HepG2 (cell line): ENCODE measurements at regions of chr4 and their contacts with region 1.

Region 1: DNA sequence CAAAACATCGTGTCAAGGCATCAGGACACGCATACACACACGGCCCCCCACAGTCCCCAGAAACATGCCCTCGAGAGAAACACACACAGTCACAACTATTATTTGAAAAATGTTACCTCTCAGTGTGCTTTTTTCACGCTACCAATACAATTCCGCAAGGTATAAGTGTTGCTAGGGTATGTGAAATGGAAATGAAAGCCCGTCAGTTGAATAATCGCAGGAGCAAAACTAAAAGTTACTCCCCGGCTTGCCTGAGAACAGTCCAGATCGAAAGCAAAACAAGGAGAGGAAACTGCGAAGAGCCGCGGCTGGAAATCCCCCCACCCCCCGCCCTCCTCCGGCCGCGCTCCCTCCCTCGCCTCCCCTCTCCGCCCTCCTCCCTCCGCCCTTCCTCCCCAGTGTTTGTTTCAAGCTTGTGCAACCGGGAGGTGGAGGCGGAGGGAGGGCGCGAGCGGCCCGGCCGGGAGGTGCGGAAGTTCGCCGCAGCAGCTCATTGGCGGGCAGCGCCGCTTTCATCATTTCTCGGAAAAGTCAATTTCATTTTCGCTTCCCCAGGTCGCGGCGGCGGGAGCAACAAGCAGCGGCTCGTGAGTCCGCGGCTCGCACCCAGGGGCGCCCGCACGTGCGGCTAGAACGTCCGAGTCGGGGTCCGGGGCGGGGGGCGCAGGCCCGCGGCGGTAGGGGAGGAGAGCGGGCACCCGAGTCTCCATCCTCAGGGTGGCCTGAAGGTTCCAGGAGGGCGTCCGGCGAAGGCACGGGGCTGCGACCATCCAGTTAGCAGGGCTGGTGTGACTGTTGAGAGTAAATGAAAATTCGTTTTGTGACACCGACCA is at the start of gene IRF2:
- DNase-seq: peak; percentile 93
- ATAC-seq: peak; percentile 60
- H3K4me3 ChIP-seq: peak within 1 kb of the TSS; percentile 94 to 99 (median 98)
- H3K27ac ChIP-seq: peak within 1 kb of the TSS; percentile 92
- H3K4me1 ChIP-seq: peaks cover 63% of the 10 kb centered on the region
- H3K27me3 ChIP-seq: no peaks in the 10 kb centered on the region; a peak in 1 of 5 replicates
- CTCF ChIP-seq: peak; percentile 27; the same call in 1 of the 2 replicates
- EP300 ChIP-seq: peak in 1 of 2 experiments; percentile 79; a peak in 2 of 4 replicates
- POLR2A ChIP-seq: peak in 1 of 2 experiments; percentile 66; a peak in 1 of 4 replicates
- RAD21 ChIP-seq: no peak
- total RNA-seq, gene IRF2: 15.5 and 24.8 TPM in 2 replicates

Region 2: DNA sequence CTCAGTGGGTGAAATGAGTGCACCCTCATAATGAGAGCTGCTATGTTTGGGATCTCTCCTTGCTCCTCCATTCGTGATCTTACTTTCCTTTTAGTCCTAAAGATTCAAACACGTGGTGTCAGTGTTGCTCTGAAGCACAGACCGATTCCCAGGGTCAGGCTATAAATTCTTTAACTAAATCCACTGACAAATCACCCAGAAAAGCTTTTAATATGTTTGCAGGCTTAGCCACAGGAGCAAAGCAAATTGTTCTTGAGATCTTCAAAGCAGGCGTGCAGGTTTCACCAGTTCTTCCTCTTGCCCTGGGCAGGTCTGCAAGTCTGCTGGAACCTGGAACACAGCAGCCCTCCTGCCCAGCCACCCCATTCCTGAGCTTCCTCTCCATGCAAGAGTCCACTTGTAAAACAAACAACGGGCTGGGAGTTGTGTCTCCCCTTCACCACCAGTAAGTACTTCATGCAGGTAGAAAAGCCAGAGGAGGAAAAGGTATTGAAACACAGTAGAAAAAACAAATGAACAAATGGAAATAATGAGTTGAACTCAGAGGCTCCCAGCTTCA is 186.7 kb before region 1 on chr4:
- CTCF ChIA-PET with region 1: no interaction called
- POLR2A ChIA-PET with region 1: no interaction called
- in situ Hi-C with region 1: no loop called
- intact Hi-C with region 1: loop called (anchors 5 kb)
- DNase-seq: peak; percentile 64
- ATAC-seq: peak; percentile 92
- H3K4me3 ChIP-seq: peak overlapping the region; percentile 38 to 47 (median 44); a peak in 5 of 6 replicates
- H3K27ac ChIP-seq: peak overlapping the region; percentile 44
- H3K4me1 ChIP-seq: peaks cover 58% of the 10 kb centered on the region
- H3K27me3 ChIP-seq: no peaks in the 10 kb centered on the region
- CTCF ChIP-seq: peak; percentile 75
- EP300 ChIP-seq: no peak; a peak in 1 of 4 replicates
- POLR2A ChIP-seq: no peak
- RAD21 ChIP-seq: peak; percentile 43; the same call in 1 of the 2 replicates

Region 3: GRCh38 chr4:184384056-184384809 is 90.2 kb before region 1 on chr4:
- CTCF ChIA-PET with region 1: no interaction called
- POLR2A ChIA-PET with region 1: interaction called, 3 read pairs
- in situ Hi-C with region 1: no loop called
- intact Hi-C with region 1: loop called (anchors 1 kb)
- DNase-seq: peak; percentile 86
- ATAC-seq: peak; percentile 77
- H3K4me3 ChIP-seq: peak overlapping the region; percentile 13 to 48 (median 21); a peak in 5 of 6 replicates
- H3K27ac ChIP-seq: peak overlapping the region; percentile 63
- H3K4me1 ChIP-seq: peaks cover 61% of the 10 kb centered on the region
- H3K27me3 ChIP-seq: no peaks in the 10 kb centered on the region
- CTCF ChIP-seq: no peak
- EP300 ChIP-seq: peak; percentile 77 to 87; a peak in 3 of 4 replicates
- POLR2A ChIP-seq: peak in 1 of 2 experiments; percentile 64; a peak in 2 of 4 replicates
- RAD21 ChIP-seq: no peak

Region 4: GRCh38 chr4:184439856-184440594 is 34.5 kb before region 1 on chr4:
- CTCF ChIA-PET with region 1: no interaction called
- POLR2A ChIA-PET with region 1: interaction called, 23 read pairs
- in situ Hi-C with region 1: no loop called
- intact Hi-C with region 1: loop called (anchors 2 kb)
- DNase-seq: peak; percentile 79
- ATAC-seq: peak; percentile 94
- H3K4me3 ChIP-seq: peak overlapping the region; percentile 51 to 70 (median 55)
- H3K27ac ChIP-seq: peak overlapping the region; percentile 84
- H3K4me1 ChIP-seq: peaks cover 63% of the 10 kb centered on the region
- H3K27me3 ChIP-seq: no peaks in the 10 kb centered on the region
- CTCF ChIP-seq: 0 out of 2 replicates have a peak, but pooled peaks have one; percentile 2
- EP300 ChIP-seq: peak in 1 of 2 experiments; percentile 55; a peak in 2 of 4 replicates
- POLR2A ChIP-seq: peak in 1 of 2 experiments; percentile 58; a peak in 3 of 4 replicates
- RAD21 ChIP-seq: peak; percentile 25; the same call in 1 of the 2 replicates

Region 5: GRCh38 chr4:184538023-184538599 is 63.6 kb after region 1 on chr4:
- CTCF ChIA-PET with region 1: no interaction called
- POLR2A ChIA-PET with region 1: interaction called, 5 read pairs
- in situ Hi-C with region 1: no loop called
- intact Hi-C with region 1: loop called (anchors 2 kb)
- DNase-seq: peak; percentile 85
- ATAC-seq: peak; percentile 92
- H3K4me3 ChIP-seq: peak overlapping the region; percentile 75 to 98 (median 87)
- H3K27ac ChIP-seq: peak overlapping the region; percentile 71
- H3K4me1 ChIP-seq: peaks cover 41% of the 10 kb centered on the region
- H3K27me3 ChIP-seq: no peaks in the 10 kb centered on the region; a peak in 1 of 5 replicates
- CTCF ChIP-seq: peak; percentile 92
- EP300 ChIP-seq: no peak
- POLR2A ChIP-seq: no peak
- RAD21 ChIP-seq: peak; percentile 93

Region 6: DNA sequence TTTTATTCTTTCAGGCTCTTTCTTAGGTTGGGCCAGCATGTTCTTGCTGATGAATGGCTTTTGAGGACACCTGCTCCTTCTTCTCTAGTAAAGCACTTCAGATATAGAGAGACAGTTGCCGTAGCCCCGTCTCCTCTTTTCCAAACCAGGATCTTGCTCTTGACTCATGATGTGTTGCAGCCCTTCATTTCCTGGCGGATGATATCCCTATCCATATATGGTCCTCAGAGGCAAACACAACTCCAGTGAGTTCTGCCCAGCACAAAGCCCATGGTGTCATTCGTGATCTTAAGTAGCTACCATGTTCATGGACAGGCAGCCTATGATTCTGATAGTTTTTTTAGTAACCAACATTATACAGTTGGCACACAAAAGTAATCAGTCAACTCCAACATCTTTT is 411.1 kb after region 1 on chr4:
- CTCF ChIA-PET with region 1: no interaction called
- POLR2A ChIA-PET with region 1: no interaction called
- in situ Hi-C with region 1: no loop called
- intact Hi-C with region 1: no loop called
- DNase-seq: no peak
- ATAC-seq: peak; percentile 14; the same call in 1 of the 3 replicates
- H3K4me3 ChIP-seq: peak overlapping the region in 1 of 3 experiments; percentile 22; a peak in 2 of 6 replicates
- H3K27ac ChIP-seq: peak overlapping the region; percentile 57
- H3K4me1 ChIP-seq: peaks cover 77% of the 10 kb centered on the region
- H3K27me3 ChIP-seq: no peaks in the 10 kb centered on the region
- CTCF ChIP-seq: no peak
- EP300 ChIP-seq: no peak
- POLR2A ChIP-seq: no peak
- RAD21 ChIP-seq: no peak